SK-N-SH (cell line): ENCODE measurements at regions of chr4 and their contacts with region 1.

Region 1: GRCh38 chr4:13654158-13654797 is 26.8 kb upstream of the BOD1L1 start:
- DNase-seq: peak; percentile 62
- H3K4me3 ChIP-seq: peak overlapping the region; percentile 46 to 60
- H3K27ac ChIP-seq: peak overlapping the region in 1 of 2 experiments; percentile 14; a peak in 2 of 4 replicates
- H3K4me1 ChIP-seq: peaks cover 0 to 4% of the 10 kb centered on the region in 2 experiments; a peak in 1 of 4 replicates
- H3K27me3 ChIP-seq: no peaks in the 10 kb centered on the region; the same call in 1 of the 2 replicates
- CTCF ChIP-seq: peak; percentile 71
- EP300 ChIP-seq: no peak
- RAD21 ChIP-seq: peak; percentile 66

Region 2: DNA sequence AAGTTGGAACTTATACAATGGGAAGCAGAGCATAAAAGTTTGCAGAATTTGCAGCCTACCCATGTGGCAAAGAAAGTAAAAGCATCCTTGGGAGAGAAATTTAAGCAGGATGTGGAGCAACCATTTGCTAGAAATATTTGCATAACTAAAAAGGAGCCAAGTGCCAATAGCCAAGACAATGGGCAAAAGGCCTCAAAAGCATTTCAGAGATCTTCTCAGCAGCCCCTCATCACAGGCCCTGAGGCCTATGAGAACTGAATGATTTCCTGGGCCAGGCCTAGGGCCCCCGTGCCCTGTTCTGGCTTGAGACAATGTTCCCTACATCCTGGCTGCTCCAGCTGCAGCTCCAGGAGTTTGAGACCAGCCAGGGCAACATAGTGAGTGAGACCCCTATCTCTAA is 144.8 kb before region 1 on chr4:
- CTCF ChIA-PET with region 1: no interaction called
- POLR2A ChIA-PET with region 1: no interaction called
- DNase-seq: no peak
- H3K4me3 ChIP-seq: no peak overlapping the region
- H3K27ac ChIP-seq: no peak overlapping the region
- H3K4me1 ChIP-seq: no peaks in the 10 kb centered on the region
- H3K27me3 ChIP-seq: no peaks in the 10 kb centered on the region
- CTCF ChIP-seq: no peak
- EP300 ChIP-seq: no peak
- RAD21 ChIP-seq: no peak

Region 3: GRCh38 chr4:13640149-13640940 is 13.9 kb before region 1 on chr4:
- CTCF ChIA-PET with region 1: interaction called, 12 read pairs
- POLR2A ChIA-PET with region 1: no interaction called
- DNase-seq: no peak
- H3K4me3 ChIP-seq: no peak overlapping the region
- H3K27ac ChIP-seq: peak overlapping the region in 1 of 2 experiments; percentile 30; a peak in 1 of 4 replicates
- H3K4me1 ChIP-seq: 0 out of 4 replicates have a peak, but pooled peaks cover 0 to 13% of the 10 kb centered on the region in 2 experiments
- H3K27me3 ChIP-seq: no peaks in the 10 kb centered on the region; the same call in 1 of the 2 replicates
- CTCF ChIP-seq: no peak
- EP300 ChIP-seq: peak in 1 of 2 experiments; percentile 17; a peak in 1 of 4 replicates
- RAD21 ChIP-seq: no peak

Region 4: GRCh38 chr4:14452764-14453163 is 798.5 kb after region 1 on chr4:
- CTCF ChIA-PET with region 1: no interaction called
- POLR2A ChIA-PET with region 1: no interaction called
- DNase-seq: no peak
- H3K4me3 ChIP-seq: no peak overlapping the region
- H3K27ac ChIP-seq: no peak overlapping the region
- H3K4me1 ChIP-seq: no peaks in the 10 kb centered on the region; a peak in 2 of 4 replicates
- H3K27me3 ChIP-seq: no peaks in the 10 kb centered on the region
- CTCF ChIP-seq: no peak
- EP300 ChIP-seq: no peak
- RAD21 ChIP-seq: peak; percentile 14; the same call in 1 of the 2 replicates